IMR-90 (cell line): ENCODE measurements at regions of chrX and their contacts with region 1.

Region 1: DNA sequence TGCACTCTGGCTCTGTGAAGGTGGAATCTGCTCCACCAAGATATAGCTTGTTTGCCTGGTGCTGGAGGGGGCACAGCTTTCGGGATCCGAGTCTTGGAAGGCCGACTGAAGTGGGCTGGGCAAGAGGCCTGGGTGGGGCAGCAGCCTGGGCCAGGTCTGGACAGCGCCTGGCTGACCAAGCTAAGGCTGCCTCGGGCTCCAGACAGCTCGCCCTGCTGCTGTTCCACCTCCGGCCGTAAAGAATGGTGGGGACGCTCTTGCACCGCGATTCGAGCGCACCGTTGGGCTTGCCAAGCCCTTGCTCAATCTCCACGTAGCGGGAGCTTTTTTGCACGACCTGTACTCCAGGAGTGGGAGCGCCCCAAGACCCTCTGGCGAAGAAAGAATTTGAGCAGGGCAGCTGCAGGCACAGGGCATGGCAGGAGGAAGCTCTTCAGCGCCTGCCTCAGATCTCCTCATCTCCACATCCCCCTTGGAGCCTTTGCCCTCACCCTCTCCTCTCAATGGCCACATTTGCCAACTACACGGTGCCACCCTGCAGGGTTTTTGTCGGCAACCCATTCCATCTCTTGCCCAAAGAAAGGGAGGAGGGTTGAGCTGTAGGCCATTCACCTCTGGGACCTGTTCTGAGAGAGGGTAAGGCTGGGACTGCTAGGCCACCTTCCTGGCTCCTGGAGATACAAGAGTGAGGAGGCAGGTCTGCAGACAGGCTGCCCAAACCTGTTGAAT is 18.9 kb downstream of the CNGA2 start:
- DNase-seq: peak; percentile 2
- ATAC-seq: peak; percentile 37
- H3K4me3 ChIP-seq: no peak overlapping the region
- H3K27ac ChIP-seq: no peak overlapping the region
- H3K4me1 ChIP-seq: no peaks in the 10 kb centered on the region
- H3K27me3 ChIP-seq: no peaks in the 10 kb centered on the region
- CTCF ChIP-seq: peak; percentile 57
- POLR2A ChIP-seq: no peak
- RAD21 ChIP-seq: peak; percentile 60

Region 2: GRCh38 chrX:151729056-151729725 is 24.3 kb before region 1 on chrX:
- CTCF ChIA-PET with region 1: no interaction called
- POLR2A ChIA-PET with region 1: no interaction called
- dilution Hi-C with region 1: no loop called
- in situ Hi-C with region 1: no loop called
- intact Hi-C with region 1: no loop called
- DNase-seq: no peak
- ATAC-seq: no peak
- H3K4me3 ChIP-seq: no peak overlapping the region
- H3K27ac ChIP-seq: no peak overlapping the region
- H3K4me1 ChIP-seq: no peaks in the 10 kb centered on the region
- H3K27me3 ChIP-seq: no peaks in the 10 kb centered on the region
- CTCF ChIP-seq: no peak
- POLR2A ChIP-seq: no peak
- RAD21 ChIP-seq: no peak

Region 3: GRCh38 chrX:152632445-152633097 is 879.1 kb after region 1 on chrX:
- CTCF ChIA-PET with region 1: interaction called, 3 read pairs
- POLR2A ChIA-PET with region 1: no interaction called
- dilution Hi-C with region 1: no loop called
- in situ Hi-C with region 1: loop called (anchors 25 kb)
- intact Hi-C with region 1: loop called (anchors 5 kb)
- DNase-seq: peak; percentile 24
- ATAC-seq: peak; percentile 70; the same call in 1 of the 2 replicates
- H3K4me3 ChIP-seq: no peak overlapping the region
- H3K27ac ChIP-seq: no peak overlapping the region
- H3K4me1 ChIP-seq: no peaks in the 10 kb centered on the region
- H3K27me3 ChIP-seq: no peaks in the 10 kb centered on the region
- CTCF ChIP-seq: peak; percentile 71
- POLR2A ChIP-seq: no peak
- RAD21 ChIP-seq: peak; percentile 60